H1 (cell line): ENCODE measurements at regions of chr7 and their contacts with region 1.

Region 1: GRCh38 chr7:23247603-23248335 is 1.2 kb downstream of the GPNMB start:
- DNase-seq: peak in 1 of 2 experiments; percentile 67
- H3K4me3 ChIP-seq: peak overlapping the region; percentile 34 to 55 (median 46)
- H3K27ac ChIP-seq: no peak overlapping the region
- H3K4me1 ChIP-seq: peaks cover 1 to 9% (median 7%) of the 10 kb centered on the region in 4 experiments; a peak in 6 of 7 replicates
- H3K27me3 ChIP-seq: peaks cover 0 to 20% (median 15%) of the 10 kb centered on the region in 4 experiments; a peak in 6 of 7 replicates
- CTCF ChIP-seq: no peak
- EP300 ChIP-seq: no peak
- POLR2A ChIP-seq: no peak
- RAD21 ChIP-seq: no peak

Region 2: DNA sequence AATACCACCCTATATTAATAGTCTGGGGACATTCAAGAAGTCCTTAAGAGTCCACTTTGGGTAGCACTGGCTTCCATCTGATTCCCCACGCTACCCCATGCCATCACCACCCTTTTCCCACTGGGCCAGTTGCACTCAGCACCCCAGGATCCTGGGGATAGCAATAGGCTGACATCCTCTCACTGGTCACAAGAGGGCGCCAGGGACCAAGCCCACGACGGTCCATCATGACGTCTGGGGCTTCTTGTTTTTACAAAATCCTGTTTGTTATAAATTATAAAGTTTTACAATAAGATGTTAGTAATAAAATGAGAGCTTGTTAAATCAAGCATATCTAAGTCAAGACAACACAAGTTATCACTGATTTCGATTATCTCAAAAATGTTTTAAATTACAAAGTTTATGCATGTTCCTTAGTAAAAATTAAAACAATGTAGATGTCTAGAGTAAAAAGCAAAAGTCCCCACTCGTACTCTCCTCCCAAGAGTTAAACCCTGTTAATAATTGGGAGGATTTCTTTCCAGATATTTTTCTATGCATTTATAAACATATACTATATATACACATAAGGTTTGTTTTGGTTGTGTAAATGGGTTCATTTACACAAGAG is 14.2 kb after region 1 on chr7:
- CTCF ChIA-PET with region 1: interaction called, 13 read pairs
- POLR2A ChIA-PET with region 1: interaction called, 4 read pairs
- DNase-seq: peak in 1 of 2 experiments; percentile 73
- H3K4me3 ChIP-seq: no peak overlapping the region
- H3K27ac ChIP-seq: no peak overlapping the region
- H3K4me1 ChIP-seq: no peaks in the 10 kb centered on the region
- H3K27me3 ChIP-seq: no peaks in the 10 kb centered on the region
- CTCF ChIP-seq: peak; percentile 86 to 97 (median 86)
- EP300 ChIP-seq: no peak
- POLR2A ChIP-seq: no peak
- RAD21 ChIP-seq: peak; percentile 80 to 91

Region 3: GRCh38 chr7:23558303-23558702 is 310.5 kb after region 1 on chr7:
- CTCF ChIA-PET with region 1: no interaction called
- POLR2A ChIA-PET with region 1: no interaction called
- DNase-seq: no peak
- H3K4me3 ChIP-seq: no peak overlapping the region
- H3K27ac ChIP-seq: no peak overlapping the region
- H3K4me1 ChIP-seq: no peaks in the 10 kb centered on the region
- H3K27me3 ChIP-seq: no peaks in the 10 kb centered on the region
- CTCF ChIP-seq: no peak
- EP300 ChIP-seq: no peak
- POLR2A ChIP-seq: no peak
- RAD21 ChIP-seq: no peak